ENCODE measurements at regions of chr14 and their contacts with region 1.

Region 1: DNA sequence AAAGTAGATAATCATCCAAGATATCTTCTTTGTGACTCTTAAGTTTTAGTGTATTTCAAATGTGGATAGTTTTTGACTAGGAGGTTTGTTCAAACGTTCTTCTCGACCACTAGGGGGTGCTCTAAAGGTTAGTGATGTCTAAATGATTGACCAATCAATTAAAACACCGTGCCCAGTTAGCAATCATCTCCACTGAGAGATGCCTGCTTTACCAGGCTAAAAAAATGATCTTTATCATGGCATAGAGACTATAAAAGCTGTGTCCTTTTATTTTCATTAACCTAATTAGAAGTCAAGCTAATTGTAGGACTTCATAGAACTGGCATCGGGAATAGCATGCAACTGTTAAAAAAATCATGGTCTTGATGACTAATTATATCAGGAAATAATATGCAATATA is 153.9 kb downstream of the PRKCH start:
- DNase-seq: peak; percentile 74
- H3K4me3 ChIP-seq: no peak overlapping the region
- H3K27ac ChIP-seq: peak overlapping the region; percentile 100
- H3K4me1 ChIP-seq: peaks cover 78% of the 10 kb centered on the region
- H3K27me3 ChIP-seq: no peaks in the 10 kb centered on the region
- CTCF ChIP-seq: peak; percentile 48 to 53
- POLR2A ChIP-seq: no peak

Region 2: GRCh38 chr14:61296719-61297502 is 178.4 kb before region 1 on chr14:
- CTCF ChIA-PET with region 1: interaction called, 10 read pairs
- POLR2A ChIA-PET with region 1: no interaction called
- dilution Hi-C with region 1: loop called (anchors 25 kb)
- intact Hi-C with region 1: no loop called
- DNase-seq: peak; percentile 77
- H3K4me3 ChIP-seq: no peak overlapping the region
- H3K27ac ChIP-seq: peak overlapping the region; percentile 47
- H3K4me1 ChIP-seq: peaks cover 29% of the 10 kb centered on the region
- H3K27me3 ChIP-seq: no peaks in the 10 kb centered on the region
- CTCF ChIP-seq: peak; percentile 40 to 51
- POLR2A ChIP-seq: no peak

Region 3: GRCh38 chr14:61561657-61562276 is 86.5 kb after region 1 on chr14:
- CTCF ChIA-PET with region 1: interaction called, 36 read pairs
- POLR2A ChIA-PET with region 1: no interaction called
- dilution Hi-C with region 1: no loop called
- intact Hi-C with region 1: loop called (anchors 1 kb)
- DNase-seq: peak; percentile 99
- H3K4me3 ChIP-seq: no peak overlapping the region
- H3K27ac ChIP-seq: peak overlapping the region; percentile 99
- H3K4me1 ChIP-seq: peaks cover 56% of the 10 kb centered on the region
- H3K27me3 ChIP-seq: no peaks in the 10 kb centered on the region
- CTCF ChIP-seq: no peak
- POLR2A ChIP-seq: peak; percentile 77

Region 4: DNA sequence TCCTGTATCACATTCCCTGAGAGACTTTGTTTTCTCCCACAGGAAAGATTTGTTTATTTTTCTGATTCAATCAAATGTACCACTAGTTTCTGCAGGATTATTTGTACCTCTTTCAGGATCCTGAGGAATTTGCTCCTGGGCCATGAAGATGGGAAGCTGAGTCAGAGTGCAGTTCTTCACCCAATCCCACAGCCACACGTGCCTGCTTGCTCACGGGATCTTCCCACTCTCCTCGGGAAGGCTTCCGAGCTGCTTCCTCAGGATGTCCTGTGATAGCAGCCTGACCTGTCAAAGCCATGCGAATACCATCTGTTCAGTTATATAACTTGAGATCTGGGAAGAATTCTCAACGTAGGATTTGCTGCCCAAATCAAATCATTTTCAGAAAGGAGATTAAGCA is 178.2 kb after region 1 on chr14:
- CTCF ChIA-PET with region 1: no interaction called
- POLR2A ChIA-PET with region 1: no interaction called
- dilution Hi-C with region 1: no loop called
- intact Hi-C with region 1: loop called (anchors 1 kb)
- DNase-seq: peak; percentile 92
- H3K4me3 ChIP-seq: no peak overlapping the region
- H3K27ac ChIP-seq: peak overlapping the region; percentile 14
- H3K4me1 ChIP-seq: peaks cover 19% of the 10 kb centered on the region
- H3K27me3 ChIP-seq: no peaks in the 10 kb centered on the region
- CTCF ChIP-seq: no peak
- POLR2A ChIP-seq: no peak

Region 5: DNA sequence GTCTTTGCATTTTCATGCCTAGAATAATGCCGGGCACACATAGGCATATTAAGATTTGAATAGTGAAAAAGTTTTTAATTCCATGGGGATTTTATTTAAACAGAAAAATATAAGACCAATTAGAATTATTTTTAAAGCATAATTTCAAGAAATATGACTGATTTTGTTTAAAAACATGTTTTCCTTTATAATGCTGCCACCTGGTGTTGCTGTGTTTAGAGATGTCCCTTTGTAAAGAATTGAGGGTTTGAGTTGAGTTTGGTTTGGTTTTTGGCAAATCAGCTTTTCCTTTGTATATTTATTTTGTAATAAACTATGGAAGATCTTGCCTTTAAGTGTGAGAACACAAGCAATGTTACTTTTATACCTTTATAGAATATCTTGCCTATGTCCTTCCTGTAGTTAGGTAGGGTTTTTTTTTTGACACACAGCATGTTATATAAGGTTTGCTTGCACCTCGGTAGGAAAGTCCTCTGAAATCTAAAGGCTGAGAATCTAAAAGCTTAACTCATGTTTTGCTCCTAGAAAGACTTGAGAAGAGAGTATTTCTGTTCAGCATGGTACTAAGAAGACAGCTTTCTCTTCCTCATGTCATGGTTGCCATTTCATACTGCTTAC is 255.5 kb after region 1 on chr14:
- CTCF ChIA-PET with region 1: interaction called, 21 read pairs
- POLR2A ChIA-PET with region 1: interaction called, 4 read pairs
- dilution Hi-C with region 1: loop called (anchors 25 kb)
- intact Hi-C with region 1: loop called (anchors 1 kb)
- DNase-seq: peak; percentile 54
- H3K4me3 ChIP-seq: no peak overlapping the region
- H3K27ac ChIP-seq: no peak overlapping the region
- H3K4me1 ChIP-seq: no peaks in the 10 kb centered on the region
- H3K27me3 ChIP-seq: no peaks in the 10 kb centered on the region
- CTCF ChIP-seq: peak; percentile 2 to 18
- POLR2A ChIP-seq: no peak

Region 6: DNA sequence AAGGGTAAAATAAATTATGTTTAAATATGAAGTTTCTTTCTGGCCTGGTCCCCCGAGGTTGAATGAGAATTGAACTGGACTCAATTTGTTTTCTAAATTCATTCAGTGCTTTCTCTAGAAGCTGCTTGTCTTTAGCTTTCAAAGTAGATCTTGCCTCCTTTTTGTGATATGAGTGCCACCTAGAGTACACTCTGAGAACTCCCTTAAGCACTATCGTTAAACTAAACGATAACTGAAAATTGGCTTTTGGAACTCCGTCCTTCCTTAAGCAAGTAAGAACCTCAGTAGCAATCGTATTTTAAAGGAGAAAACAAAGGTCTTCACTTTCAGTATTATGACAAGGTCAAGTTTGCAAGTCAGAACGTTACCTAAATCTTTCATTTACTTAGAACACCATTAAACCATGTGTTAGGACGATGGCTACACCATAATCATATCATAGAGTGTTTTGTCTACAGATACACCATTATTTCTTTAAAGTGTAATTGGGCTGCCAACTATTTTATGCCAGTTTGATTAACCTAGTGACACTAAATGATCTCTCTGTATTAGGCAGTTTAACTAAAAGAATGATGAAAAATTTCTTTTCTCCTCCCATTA is 651.7 kb after region 1 on chr14:
- CTCF ChIA-PET with region 1: interaction called, 11 read pairs
- POLR2A ChIA-PET with region 1: no interaction called
- dilution Hi-C with region 1: no loop called
- intact Hi-C with region 1: no loop called
- DNase-seq: peak; percentile 75
- H3K4me3 ChIP-seq: no peak overlapping the region
- H3K27ac ChIP-seq: no peak overlapping the region
- H3K4me1 ChIP-seq: no peaks in the 10 kb centered on the region
- H3K27me3 ChIP-seq: peaks cover 42 to 66% of the 10 kb centered on the region in 2 experiments
- CTCF ChIP-seq: peak; percentile 44 to 63
- POLR2A ChIP-seq: no peak